ENCODE measurements at regions of chr2 and their contacts with region 1.

Region 1: GRCh38 chr2:160332318-160332717 is 132.2 kb upstream of the ITGB6 start:
- DNase-seq: no peak
- ATAC-seq: peak; percentile 65 to 70
- H3K4me3 ChIP-seq: no peak overlapping the region
- H3K27ac ChIP-seq: no peak overlapping the region
- H3K4me1 ChIP-seq: peaks cover 93% of the 10 kb centered on the region
- H3K27me3 ChIP-seq: no peaks in the 10 kb centered on the region
- CTCF ChIP-seq: peak; percentile 12

Region 2: DNA sequence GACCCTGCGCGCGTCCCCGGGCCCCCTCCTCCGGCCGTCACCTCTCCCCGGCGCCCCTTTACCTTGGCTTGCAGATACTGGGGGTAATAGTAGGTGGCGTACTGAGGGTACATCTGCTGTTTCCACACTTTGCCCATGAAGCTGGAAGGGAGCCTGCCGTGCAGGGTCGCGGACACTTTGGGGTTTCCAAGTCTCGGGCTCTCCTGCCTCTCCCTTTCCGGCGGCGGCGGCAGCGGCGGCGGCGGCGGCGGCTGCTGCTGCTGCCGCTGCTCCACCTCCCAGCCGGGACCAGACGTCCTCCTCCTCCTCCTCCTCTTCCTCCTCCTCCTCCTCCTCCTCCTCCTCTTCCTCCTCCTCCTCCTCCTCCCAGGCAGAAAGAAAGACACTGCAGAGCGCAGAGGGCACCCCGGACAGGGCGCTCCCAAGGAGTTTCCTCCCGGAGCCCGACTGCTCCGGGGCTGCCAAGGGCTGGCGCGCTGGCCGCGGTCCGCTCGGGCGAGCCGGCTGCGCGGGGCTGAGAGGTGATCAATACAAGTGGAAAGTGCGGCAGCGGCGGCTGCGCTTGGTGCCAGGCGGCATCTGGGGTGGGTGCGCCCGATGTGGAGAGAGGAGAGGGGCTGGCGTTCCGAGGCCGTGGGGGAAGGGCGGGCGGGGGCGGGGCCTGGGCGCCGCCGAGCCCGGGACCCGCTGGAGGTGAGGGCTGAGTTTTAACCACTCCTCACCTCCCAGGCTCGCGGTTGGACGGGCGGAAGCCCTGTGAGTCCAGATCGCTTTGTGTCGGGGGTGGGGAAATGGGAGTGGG is 161.1 kb after region 1 on chr2 and contains the start of gene RBMS1:
- intact Hi-C with region 1: loop called (anchors 10 kb)
- DNase-seq: peak; percentile 74
- ATAC-seq: peak; percentile 73 to 76
- H3K4me3 ChIP-seq: peak within 1 kb of the TSS; percentile 82
- H3K27ac ChIP-seq: peak within 1 kb of the TSS; percentile 95
- H3K4me1 ChIP-seq: peaks cover 36% of the 10 kb centered on the region
- H3K27me3 ChIP-seq: no peaks in the 10 kb centered on the region
- CTCF ChIP-seq: no peak
- total RNA-seq, gene RBMS1: 95.3 TPM

Measured in lower lobe of right lung (tissue), 2 donors.